Activated CD4-positive, alpha-beta T cell treated with anti-CD3 and anti-CD28 coated beads, Interleukin-2, amount 10 ng/mL, durations not matched to agents 24 days and 14 days (primary cell): ENCODE measurements at regions of chr1 and their contacts with region 1.

Region 1: GRCh38 chr1:117367047-117368018 is at the start of gene MAN1A2:
- DNase-seq: peak; percentile 95
- H3K4me3 Mint-ChIP-seq: peak within 1 kb of the TSS; percentile 93
- H3K27ac Mint-ChIP-seq: peak within 1 kb of the TSS; percentile 93
- H3K4me1 Mint-ChIP-seq: peaks cover 41% of the 10 kb centered on the region
- H3K27me3 Mint-ChIP-seq: no peaks in the 10 kb centered on the region
- total RNA-seq, gene MAN1A2: 23.9 and 28.7 TPM in 2 replicates

Region 2: DNA sequence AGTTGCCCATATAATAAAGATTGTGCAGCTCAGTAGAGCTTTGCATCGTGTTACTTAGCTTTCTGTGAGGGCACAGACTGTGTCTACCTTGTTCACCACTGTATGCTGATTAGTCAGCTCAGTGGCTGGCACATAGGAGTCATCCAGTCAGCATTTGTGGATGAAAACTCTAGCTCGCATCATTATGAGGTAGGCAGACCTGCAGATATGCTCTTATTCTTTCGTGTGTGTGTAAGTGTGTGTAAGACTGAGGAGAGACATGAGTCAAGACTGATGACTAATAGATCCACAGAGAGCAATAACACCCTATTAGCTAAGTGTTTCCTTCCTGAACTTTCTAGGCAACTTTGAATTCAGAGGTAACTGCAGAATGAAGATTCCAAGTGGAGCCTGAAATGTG is 290.1 kb before region 1 on chr1:
- intact Hi-C with region 1: loop called (anchors 5 kb)
- DNase-seq: no peak
- H3K4me3 Mint-ChIP-seq: no peak overlapping the region
- H3K27ac Mint-ChIP-seq: peak overlapping the region; percentile 91
- H3K4me1 Mint-ChIP-seq: peaks cover 17% of the 10 kb centered on the region
- H3K27me3 Mint-ChIP-seq: no peaks in the 10 kb centered on the region

Region 3: GRCh38 chr1:117929173-117929989 is 562.0 kb after region 1 on chr1 and contains the starts of genes GDAP2 and WDR3:
- intact Hi-C with region 1: loop called (anchors 1 kb)
- DNase-seq: peak; percentile 99
- H3K4me3 Mint-ChIP-seq: peak within 1 kb of the TSS; percentile 98
- H3K27ac Mint-ChIP-seq: peak within 1 kb of the TSS; percentile 95
- H3K4me1 Mint-ChIP-seq: peaks cover 36% of the 10 kb centered on the region
- H3K27me3 Mint-ChIP-seq: peaks cover 2% of the 10 kb centered on the region
- total RNA-seq, gene GDAP2: 22.2 and 25.7 TPM in 2 replicates
- total RNA-seq, gene WDR3: 79.8 and 81.7 TPM in 2 replicates

Region 4: GRCh38 chr1:119140177-119141019 is 1773.1 kb after region 1 on chr1 and contains the start of gene WARS2:
- intact Hi-C with region 1: loop called (anchors 5 kb)
- DNase-seq: peak; percentile 98
- H3K4me3 Mint-ChIP-seq: no peak within 1 kb of the TSS
- H3K27ac Mint-ChIP-seq: no peak within 1 kb of the TSS
- H3K4me1 Mint-ChIP-seq: peaks cover 26% of the 10 kb centered on the region
- H3K27me3 Mint-ChIP-seq: no peaks in the 10 kb centered on the region
- total RNA-seq, gene WARS2: 20.2 and 21.5 TPM in 2 replicates